ENCODE measurements at regions of chr6 and their contacts with region 1.

Region 1: DNA sequence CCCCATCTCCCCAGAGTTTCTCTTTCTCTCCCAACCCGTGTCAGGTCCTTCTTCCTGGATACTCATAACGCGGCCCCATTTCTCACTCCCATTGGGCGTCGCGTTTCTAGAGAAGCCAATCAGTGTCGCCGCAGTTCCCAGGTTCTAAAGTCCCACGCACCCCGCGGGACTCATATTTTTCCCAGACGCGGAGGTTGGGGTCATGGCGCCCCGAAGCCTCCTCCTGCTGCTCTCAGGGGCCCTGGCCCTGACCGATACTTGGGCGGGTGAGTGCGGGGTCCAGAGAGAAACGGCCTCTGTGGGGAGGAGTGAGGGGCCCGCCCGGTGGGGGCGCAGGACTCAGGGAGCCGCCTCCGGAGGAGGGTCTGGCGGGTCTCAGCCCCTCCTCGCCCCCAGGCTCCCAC is at the start of gene HLA-F:
- DNase-seq: no peak
- H3K4me3 ChIP-seq: no peak within 1 kb of the TSS
- H3K4me1 ChIP-seq: no peaks in the 10 kb centered on the region
- H3K27me3 ChIP-seq: 0 out of 2 replicates have a peak, but pooled peaks cover 2% of the 10 kb centered on the region

Region 2: DNA sequence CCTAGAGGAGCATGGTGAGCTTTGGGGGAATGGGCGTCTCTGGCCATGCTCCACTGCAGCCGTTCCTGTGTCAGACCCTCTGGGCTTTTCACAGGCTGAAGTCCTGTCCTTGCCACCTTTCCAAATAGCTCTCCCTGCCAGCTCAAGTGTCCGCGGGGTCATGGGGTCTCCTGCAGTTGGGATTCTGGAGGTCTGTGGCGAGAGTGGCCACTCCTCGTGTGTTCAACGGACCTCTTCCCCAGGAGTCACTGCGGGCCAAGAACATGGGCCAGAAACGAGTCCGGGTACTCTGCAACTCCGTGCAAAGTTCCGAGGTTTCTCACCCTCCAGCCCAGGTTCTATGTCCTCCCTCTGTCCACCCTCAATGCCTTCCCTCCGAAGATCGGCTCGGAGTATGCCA is 640.8 kb before region 1 on chr6:
- in situ Hi-C with region 1: no loop called
- DNase-seq: no peak
- H3K4me3 ChIP-seq: no peak overlapping the region
- H3K4me1 ChIP-seq: no peaks in the 10 kb centered on the region
- H3K27me3 ChIP-seq: peaks cover 4% of the 10 kb centered on the region; the same call in 1 of the 2 replicates

Region 3: GRCh38 chr6:29368765-29369164 is 354.5 kb before region 1 on chr6 and contains the start of gene OR5V1:
- in situ Hi-C with region 1: no loop called
- DNase-seq: no peak
- H3K4me3 ChIP-seq: no peak within 1 kb of the TSS
- H3K4me1 ChIP-seq: no peaks in the 10 kb centered on the region
- H3K27me3 ChIP-seq: no peaks in the 10 kb centered on the region

Region 4: DNA sequence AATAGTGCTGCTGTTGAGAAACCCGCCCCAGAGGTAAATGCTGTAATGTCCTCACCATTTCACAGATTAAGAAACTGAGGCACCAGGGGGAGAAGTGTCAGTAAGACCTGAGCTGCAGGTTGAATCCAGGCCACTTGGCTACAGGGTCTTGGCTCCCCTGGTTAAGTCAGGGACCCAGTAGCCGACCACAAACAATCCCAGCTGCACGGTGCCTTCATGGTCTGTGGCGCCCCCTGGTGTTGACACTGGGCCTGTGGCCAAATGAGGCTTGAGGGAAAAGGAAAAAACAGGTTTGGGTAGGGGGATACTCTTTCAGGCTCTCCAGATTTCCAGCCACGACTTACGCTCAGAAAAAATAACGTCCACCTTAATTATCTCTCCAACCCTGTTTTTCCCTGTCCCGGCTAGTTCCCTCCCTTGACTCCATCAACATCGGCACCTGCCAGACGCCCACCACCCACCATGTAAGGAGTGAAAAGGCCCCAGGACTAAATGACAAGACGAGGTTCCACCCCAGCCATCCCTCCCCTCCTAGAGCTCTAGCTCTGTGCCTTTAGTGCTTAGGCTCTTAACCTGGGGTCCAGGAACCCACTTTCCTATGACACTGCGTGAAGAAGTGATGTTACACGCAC is 290.1 kb after region 1 on chr6:
- in situ Hi-C with region 1: loop called (anchors 25 kb)
- DNase-seq: peak in 1 of 2 experiments; percentile 27
- H3K4me3 ChIP-seq: no peak overlapping the region
- H3K4me1 ChIP-seq: no peaks in the 10 kb centered on the region
- H3K27me3 ChIP-seq: no peaks in the 10 kb centered on the region

Measured in HAP-1 (cell line).